ENCODE measurements at regions of chr15 and their contacts with region 1.

Region 1: DNA sequence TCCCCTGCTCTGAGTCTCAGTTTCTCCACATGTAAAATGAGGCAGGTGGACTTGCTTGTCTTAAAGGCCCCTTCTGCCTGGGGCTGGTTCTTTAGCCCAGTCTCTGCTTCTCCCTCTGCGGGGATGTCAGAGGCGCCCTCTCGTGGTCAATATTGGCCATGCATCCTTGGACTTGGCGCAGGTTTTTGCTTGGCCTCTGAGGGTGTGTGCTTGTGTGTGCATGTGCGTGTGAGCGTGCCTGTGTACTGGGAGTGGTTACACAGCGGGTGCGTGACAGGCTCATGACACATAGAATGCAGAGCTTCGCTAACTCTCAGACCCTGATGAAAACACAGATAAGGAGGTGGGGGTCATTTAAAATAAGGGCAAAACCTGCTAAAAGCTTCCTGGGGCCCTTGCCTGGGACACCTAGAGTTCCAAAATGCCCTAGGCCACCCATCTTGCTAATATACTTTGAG is 160.9 kb downstream of the SMAD6 start:
- DNase-seq: peak; percentile 82 to 84
- ATAC-seq: peak; percentile 71 to 92 (median 87)
- H3K4me3 ChIP-seq: no peak overlapping the region
- H3K27ac ChIP-seq: no peak overlapping the region
- H3K4me1 ChIP-seq: peaks cover 0 to 33% (median 21%) of the 10 kb centered on the region in 9 donors
- H3K27me3 ChIP-seq: no peaks in the 10 kb centered on the region
- CTCF ChIP-seq: peak; percentile 90 to 97 (median 93)

Region 2: GRCh38 chr15:66611257-66612053 is 251.5 kb before region 1 on chr15:
- intact Hi-C with region 1: loop called in 2 of 10 experiments (anchors 5 kb)
- DNase-seq: no peak
- ATAC-seq: peak in 2 of 8 donors; percentile 24 to 54
- H3K4me3 ChIP-seq: no peak overlapping the region
- H3K27ac ChIP-seq: no peak overlapping the region
- H3K4me1 ChIP-seq: peaks cover 0 to 33% (median 16%) of the 10 kb centered on the region in 9 donors
- H3K27me3 ChIP-seq: no peaks in the 10 kb centered on the region
- CTCF ChIP-seq: no peak

Region 3: DNA sequence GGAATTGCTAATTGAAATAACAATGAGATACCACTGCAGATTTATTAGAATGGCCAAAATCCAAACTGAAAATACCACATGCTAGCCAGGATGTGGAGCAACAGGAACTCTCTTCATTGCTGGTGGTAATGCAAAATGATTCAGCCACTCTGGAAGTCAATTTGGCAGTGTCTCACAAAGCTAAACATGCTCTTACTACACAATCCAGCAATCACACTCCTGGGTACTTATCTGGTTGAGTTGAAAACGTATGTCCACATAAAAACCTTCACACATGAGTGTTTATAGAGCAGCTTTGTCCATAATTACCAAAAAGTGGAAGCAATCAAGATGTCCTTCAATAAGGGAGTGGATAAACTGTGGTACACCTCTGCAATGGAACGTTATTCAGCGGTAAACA is 47.6 kb before region 1 on chr15:
- intact Hi-C with region 1: no loop called
- DNase-seq: no peak
- ATAC-seq: no peak
- H3K4me3 ChIP-seq: no peak overlapping the region
- H3K27ac ChIP-seq: peak overlapping the region in 1 of 10 donors; percentile 32
- H3K4me1 ChIP-seq: peaks cover 0 to 12% (median 0%) of the 10 kb centered on the region in 9 donors
- H3K27me3 ChIP-seq: no peaks in the 10 kb centered on the region
- CTCF ChIP-seq: no peak

Region 4: DNA sequence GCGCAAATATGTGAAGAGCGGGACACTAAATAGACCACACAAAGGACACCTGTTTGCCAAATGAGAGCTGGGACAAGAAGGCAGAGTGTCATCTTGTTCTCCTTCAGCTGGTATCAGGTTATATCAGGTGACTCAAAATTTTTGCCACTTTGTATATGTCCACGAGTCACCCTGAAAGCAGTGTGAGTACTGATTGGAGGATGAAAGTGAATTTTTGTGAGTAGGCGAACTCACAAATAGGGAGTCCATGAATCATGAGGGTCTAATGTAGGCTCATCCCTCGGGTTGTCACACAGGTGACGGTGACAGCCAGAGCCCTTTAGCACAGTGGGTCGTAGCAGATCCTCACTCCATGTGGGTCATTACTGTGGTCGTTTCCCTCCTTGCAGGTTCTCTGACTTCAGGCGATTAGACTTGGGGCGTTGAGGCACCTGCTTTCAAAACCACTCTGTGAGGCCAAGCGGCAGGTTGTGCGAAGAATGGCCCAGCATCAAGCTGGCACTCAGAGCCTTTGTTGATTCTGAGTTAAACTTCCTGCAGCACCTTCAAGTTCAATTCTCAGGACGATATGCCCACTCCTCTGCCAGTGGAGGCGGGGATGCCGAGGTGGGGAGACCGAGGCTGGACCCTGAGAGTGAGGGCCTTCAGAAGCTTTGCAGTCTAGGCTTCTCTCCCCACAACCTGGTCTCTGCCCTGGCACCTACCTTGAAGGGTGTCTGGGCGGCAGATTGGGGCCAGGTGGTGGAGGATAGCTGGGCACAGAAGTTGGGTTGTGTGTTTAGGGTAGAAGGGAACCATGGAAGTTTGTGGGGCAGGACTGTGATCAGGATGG is 12.9 kb after region 1 on chr15:
- intact Hi-C with region 1: loop called in 1 of 10 experiments (anchors 1 kb)
- DNase-seq: no peak
- ATAC-seq: no peak
- H3K4me3 ChIP-seq: no peak overlapping the region
- H3K27ac ChIP-seq: peak overlapping the region in 4 of 10 donors; percentile 14 to 91 (median 82)
- H3K4me1 ChIP-seq: peaks cover 9 to 49% (median 37%) of the 10 kb centered on the region in 9 donors
- H3K27me3 ChIP-seq: no peaks in the 10 kb centered on the region
- CTCF ChIP-seq: no peak

Region 5: DNA sequence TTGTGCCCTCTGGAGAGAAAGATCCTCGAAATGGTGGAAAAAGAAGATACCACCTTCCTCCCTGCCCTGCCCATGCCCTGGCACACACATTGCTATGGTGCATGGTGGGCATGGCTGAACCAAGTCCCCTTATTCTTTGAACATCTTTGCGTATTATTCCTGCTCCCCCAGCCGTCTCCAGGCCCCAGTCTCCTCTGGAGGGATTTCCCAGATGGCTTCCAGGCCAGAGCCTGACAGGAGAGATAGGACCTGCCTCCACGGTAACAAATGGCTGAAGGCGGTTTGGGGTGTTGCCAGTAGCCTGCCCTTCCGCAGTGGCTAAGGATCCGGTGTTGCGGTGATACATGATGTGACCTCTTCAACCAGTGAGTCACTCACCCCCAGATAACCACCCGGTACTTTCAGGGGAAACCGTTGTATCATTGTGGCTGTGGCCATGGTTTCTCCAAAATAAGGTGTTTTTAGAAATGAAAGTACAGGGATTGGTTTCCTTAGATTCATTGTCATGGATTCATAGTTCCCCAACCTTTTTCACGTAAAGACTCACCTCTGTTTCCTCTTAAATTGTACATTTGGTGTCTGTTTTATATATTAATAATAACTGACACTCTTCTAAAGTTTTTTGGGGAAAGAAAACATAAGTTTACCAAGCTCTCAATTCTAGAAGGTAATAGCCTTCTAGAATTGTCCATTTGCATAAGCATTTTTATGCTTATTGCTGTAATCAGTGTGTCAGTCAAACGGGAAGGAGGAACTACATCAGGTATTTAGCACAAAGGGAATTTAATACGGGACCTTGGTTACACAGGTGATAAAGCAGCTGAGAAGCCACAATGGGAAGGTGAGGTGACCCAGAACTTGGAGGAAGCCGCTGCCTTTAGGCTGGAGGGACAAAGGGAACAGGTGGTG is 228.4 kb after region 1 on chr15:
- intact Hi-C with region 1: no loop called
- DNase-seq: peak; percentile 73 to 84
- ATAC-seq: peak; percentile 71 to 92 (median 90)
- H3K4me3 ChIP-seq: peak overlapping the region in 4 of 10 donors; percentile 1 to 15 (median 6)
- H3K27ac ChIP-seq: peak overlapping the region in 8 of 10 donors; percentile 8 to 79 (median 53)
- H3K4me1 ChIP-seq: peaks cover 33 to 90% (median 74%) of the 10 kb centered on the region in 9 donors
- H3K27me3 ChIP-seq: no peaks in the 10 kb centered on the region
- CTCF ChIP-seq: no peak